Naive thymus-derived CD4-positive, alpha-beta T cell (primary cell): ENCODE measurements at regions of chr1 and their contacts with region 1.

Region 1: GRCh38 chr1:28602536-28603439 is 10.7 kb downstream of the RAB42 start:
- DNase-seq: peak in 3 of 9 donors; percentile 22 to 36 (median 25)
- ATAC-seq: no peak
- H3K4me3 ChIP-seq: no peak overlapping the region
- H3K4me3 Mint-ChIP-seq: no peak overlapping the region
- H3K27ac ChIP-seq: no peak overlapping the region
- H3K27ac Mint-ChIP-seq: peak overlapping the region in 1 of 9 donors; percentile 36
- H3K4me1 ChIP-seq: no peaks in the 10 kb centered on the region
- H3K4me1 Mint-ChIP-seq: peaks cover 0 to 23% (median 0%) of the 10 kb centered on the region in 7 donors
- H3K27me3 ChIP-seq: no peaks in the 10 kb centered on the region
- H3K27me3 Mint-ChIP-seq: no peaks in the 10 kb centered on the region

Region 2: DNA sequence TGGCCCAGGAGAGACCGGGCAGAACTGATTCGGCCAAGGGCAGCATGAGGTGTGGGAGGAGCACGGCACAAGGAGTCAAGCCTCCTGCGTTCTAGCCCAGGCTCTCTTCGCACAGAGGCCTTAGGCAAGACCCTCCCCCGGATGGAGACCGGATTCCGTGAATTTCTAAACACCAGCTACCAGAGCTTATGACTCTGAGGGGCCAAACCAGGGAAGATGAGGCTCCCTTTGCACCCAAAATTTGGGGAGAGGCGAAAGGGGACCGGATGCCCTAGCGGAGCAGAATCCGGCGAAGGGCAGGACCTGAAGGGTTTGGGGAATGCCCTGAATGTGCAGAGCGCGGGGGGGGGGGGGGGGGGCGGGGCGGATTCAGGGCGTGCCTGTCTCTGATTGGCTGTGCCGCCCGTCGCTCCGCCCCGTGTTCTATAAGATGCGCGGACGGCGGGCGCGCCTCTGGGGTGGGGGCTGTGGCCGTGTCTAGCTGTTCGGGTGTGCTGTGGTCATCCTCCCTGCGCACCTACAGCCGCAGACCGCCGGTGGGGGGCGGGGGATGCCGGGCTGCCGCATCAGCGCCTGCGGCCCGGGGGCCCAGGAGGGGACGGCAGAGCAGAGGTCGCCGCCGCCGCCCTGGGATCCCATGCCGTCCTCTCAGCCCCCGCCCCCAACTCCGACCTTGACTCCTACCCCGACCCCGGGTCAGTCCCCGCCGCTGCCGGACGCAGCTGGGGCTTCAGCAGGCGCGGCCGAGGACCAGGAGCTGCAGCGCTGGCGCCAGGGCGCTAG is 1609.4 kb before region 1 on chr1 and contains the start of gene TRNP1:
- CTCF ChIA-PET with region 1: no interaction called
- POLR2A ChIA-PET with region 1: no interaction called
- intact Hi-C with region 1: no loop called
- DNase-seq: peak; percentile 24 to 79 (median 50)
- ATAC-seq: peak; percentile 75
- H3K4me3 ChIP-seq: peak within 1 kb of the TSS; percentile 53
- H3K4me3 Mint-ChIP-seq: peak within 1 kb of the TSS; percentile 74 to 91 (median 78)
- H3K27ac ChIP-seq: no peak within 1 kb of the TSS
- H3K27ac Mint-ChIP-seq: peak within 1 kb of the TSS in 3 of 9 donors; percentile 48 to 68 (median 50)
- H3K4me1 ChIP-seq: peaks cover 5 to 21% of the 10 kb centered on the region in 2 donors
- H3K4me1 Mint-ChIP-seq: peaks cover 5 to 27% (median 22%) of the 10 kb centered on the region in 7 donors
- H3K27me3 ChIP-seq: peaks cover 0 to 18% of the 10 kb centered on the region in 2 donors
- H3K27me3 Mint-ChIP-seq: peaks cover 37 to 71% (median 42%) of the 10 kb centered on the region in 5 donors
- total RNA-seq, gene TRNP1: 0.19 to 5.0 TPM in 2 of 5 experiments, not detected in the others

Region 3: DNA sequence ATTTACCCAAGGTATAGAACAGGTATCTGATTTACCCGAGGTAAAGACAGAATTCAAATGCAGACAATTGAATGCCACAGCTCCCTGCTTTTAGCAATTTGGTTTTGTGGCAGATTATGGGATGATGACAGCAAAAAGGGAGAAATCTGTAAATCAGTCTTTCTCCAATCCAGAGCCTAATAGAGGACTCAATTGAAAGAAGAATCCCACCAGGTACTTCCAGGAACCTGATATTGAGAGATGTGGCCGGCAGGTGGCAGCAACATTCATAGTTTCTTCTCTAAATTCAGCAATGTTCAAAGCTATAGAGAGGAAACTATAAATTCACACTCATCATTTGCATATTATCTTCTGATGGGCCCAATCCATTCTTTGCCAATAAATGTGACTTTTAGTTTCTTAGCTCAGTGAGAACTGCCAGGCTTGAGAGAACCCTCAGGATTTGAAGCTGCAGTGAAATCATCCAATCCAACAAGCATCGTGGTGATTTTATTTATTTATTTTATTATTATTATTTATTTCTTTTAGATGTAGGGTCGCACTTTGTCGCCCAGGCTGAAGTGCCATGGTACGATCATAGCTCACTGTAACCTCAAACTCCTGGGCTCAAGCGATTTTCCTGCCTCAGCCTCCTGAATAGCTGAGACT is 243.1 kb before region 1 on chr1:
- CTCF ChIA-PET with region 1: interaction called, 3 read pairs
- POLR2A ChIA-PET with region 1: no interaction called
- intact Hi-C with region 1: loop called in 1 of 2 experiments (anchors 2 kb)
- DNase-seq: peak; percentile 26 to 67 (median 54)
- ATAC-seq: peak; percentile 80
- H3K4me3 ChIP-seq: no peak overlapping the region
- H3K4me3 Mint-ChIP-seq: no peak overlapping the region
- H3K27ac ChIP-seq: no peak overlapping the region
- H3K27ac Mint-ChIP-seq: no peak overlapping the region
- H3K4me1 ChIP-seq: no peaks in the 10 kb centered on the region
- H3K4me1 Mint-ChIP-seq: peaks cover 0 to 4% (median 0%) of the 10 kb centered on the region in 7 donors
- H3K27me3 ChIP-seq: no peaks in the 10 kb centered on the region
- H3K27me3 Mint-ChIP-seq: peaks cover 0 to 9% (median 0%) of the 10 kb centered on the region in 5 donors

Region 4: GRCh38 chr1:28409090-28409489 is 193.7 kb before region 1 on chr1:
- CTCF ChIA-PET with region 1: interaction called, 3 read pairs
- POLR2A ChIA-PET with region 1: no interaction called
- intact Hi-C with region 1: loop called in 1 of 2 experiments (anchors 2 kb)
- DNase-seq: no peak
- ATAC-seq: no peak
- H3K4me3 ChIP-seq: no peak overlapping the region
- H3K4me3 Mint-ChIP-seq: no peak overlapping the region
- H3K27ac ChIP-seq: no peak overlapping the region
- H3K27ac Mint-ChIP-seq: peak overlapping the region in 1 of 9 donors; percentile 39
- H3K4me1 ChIP-seq: no peaks in the 10 kb centered on the region
- H3K4me1 Mint-ChIP-seq: peaks cover 0 to 14% (median 11%) of the 10 kb centered on the region in 7 donors
- H3K27me3 ChIP-seq: no peaks in the 10 kb centered on the region
- H3K27me3 Mint-ChIP-seq: no peaks in the 10 kb centered on the region

Region 5: DNA sequence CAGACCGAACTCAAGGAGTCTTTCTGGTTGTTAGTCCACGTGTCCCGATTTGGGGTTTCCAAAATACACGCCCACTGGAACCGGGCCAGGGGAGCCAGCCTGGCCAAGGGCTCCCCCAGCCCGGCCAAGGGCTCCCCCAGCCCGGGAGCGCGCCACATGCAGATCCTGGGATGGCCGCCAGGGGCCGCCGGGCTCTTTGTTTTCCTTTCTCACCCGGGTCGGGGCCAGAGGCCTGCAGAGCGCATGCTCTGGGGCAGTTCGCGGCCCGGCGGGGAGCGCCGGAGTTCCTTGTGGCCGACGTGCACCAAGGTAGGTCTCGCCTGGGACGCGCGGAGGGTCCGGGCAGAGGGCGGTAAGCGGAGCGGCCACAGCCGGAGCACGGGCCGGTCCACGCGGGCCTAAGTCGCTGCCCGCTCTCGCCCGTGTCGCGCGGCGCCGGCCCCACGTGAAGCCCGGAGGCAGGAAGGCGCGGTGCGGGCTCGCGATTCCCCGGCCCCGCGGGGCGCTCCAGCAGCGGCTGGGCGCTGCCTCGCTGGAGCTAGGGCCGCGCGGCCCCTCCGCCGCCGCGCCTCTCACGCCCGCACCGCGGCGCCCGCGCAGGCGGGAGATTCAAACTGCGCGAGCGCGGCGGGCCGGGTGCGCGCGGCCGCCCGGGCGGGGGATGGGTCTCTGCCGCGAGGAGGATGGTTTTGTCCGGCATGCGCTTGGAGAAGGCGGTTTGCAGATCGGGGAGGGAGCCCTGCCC is 84.6 kb before region 1 on chr1:
- CTCF ChIA-PET with region 1: interaction called, 5 read pairs
- POLR2A ChIA-PET with region 1: interaction called, 3 read pairs
- intact Hi-C with region 1: loop called (anchors 1 to 2 kb)
- DNase-seq: peak; percentile 77 to 94 (median 84)
- ATAC-seq: peak; percentile 95
- H3K4me3 ChIP-seq: peak overlapping the region; percentile 81
- H3K4me3 Mint-ChIP-seq: peak overlapping the region; percentile 76 to 91 (median 88)
- H3K27ac ChIP-seq: peak overlapping the region; percentile 76
- H3K27ac Mint-ChIP-seq: peak overlapping the region; percentile 59 to 91 (median 83)
- H3K4me1 ChIP-seq: peaks cover 9 to 10% of the 10 kb centered on the region in 2 donors
- H3K4me1 Mint-ChIP-seq: peaks cover 16 to 46% (median 23%) of the 10 kb centered on the region in 7 donors
- H3K27me3 ChIP-seq: no peaks in the 10 kb centered on the region
- H3K27me3 Mint-ChIP-seq: no peaks in the 10 kb centered on the region

Region 6: GRCh38 chr1:28591708-28592320 is 11.0 kb before region 1 on chr1 and contains the start of gene RAB42:
- CTCF ChIA-PET with region 1: no interaction called
- POLR2A ChIA-PET with region 1: no interaction called
- intact Hi-C with region 1: no loop called
- DNase-seq: peak in 1 of 9 donors; percentile 14
- ATAC-seq: peak; percentile 70
- H3K4me3 ChIP-seq: no peak within 1 kb of the TSS
- H3K4me3 Mint-ChIP-seq: peak within 1 kb of the TSS; percentile 73 to 88 (median 81)
- H3K27ac ChIP-seq: peak within 1 kb of the TSS; percentile 14
- H3K27ac Mint-ChIP-seq: no peak within 1 kb of the TSS
- H3K4me1 ChIP-seq: no peaks in the 10 kb centered on the region
- H3K4me1 Mint-ChIP-seq: peaks cover 0 to 11% (median 4%) of the 10 kb centered on the region in 7 donors
- H3K27me3 ChIP-seq: no peaks in the 10 kb centered on the region
- H3K27me3 Mint-ChIP-seq: peaks cover 0 to 8% (median 5%) of the 10 kb centered on the region in 5 donors
- total RNA-seq, gene RAB42: 1.1 to 1.2 TPM in 2 of 5 experiments, not detected in the others

Region 7: DNA sequence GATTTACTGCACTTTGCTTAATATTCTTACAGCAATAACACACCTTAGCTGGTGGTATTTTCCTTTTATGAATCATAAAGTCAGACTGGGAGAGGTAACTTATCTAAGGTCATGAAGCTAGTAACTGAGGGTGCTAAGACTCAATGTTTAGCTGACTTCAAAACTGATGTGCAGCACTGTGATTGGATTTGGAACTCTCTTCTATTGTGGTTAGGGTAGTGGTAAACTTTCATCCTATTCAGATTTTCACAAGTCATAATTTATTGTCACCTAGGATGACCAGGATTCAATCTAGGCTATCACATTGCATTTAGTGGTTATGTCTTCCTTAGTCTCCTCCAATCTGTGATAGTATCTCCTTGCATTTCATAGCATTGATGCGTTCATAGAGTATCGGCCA is 330.5 kb after region 1 on chr1:
- CTCF ChIA-PET with region 1: no interaction called
- POLR2A ChIA-PET with region 1: no interaction called
- intact Hi-C with region 1: no loop called
- DNase-seq: peak in 6 of 9 donors; percentile 24 to 48 (median 32)
- ATAC-seq: peak; percentile 75
- H3K4me3 ChIP-seq: peak overlapping the region; percentile 15
- H3K4me3 Mint-ChIP-seq: peak overlapping the region; percentile 1 to 84 (median 68)
- H3K27ac ChIP-seq: peak overlapping the region; percentile 7
- H3K27ac Mint-ChIP-seq: peak overlapping the region in 8 of 9 donors; percentile 39 to 95 (median 54)
- H3K4me1 ChIP-seq: peaks cover 56 to 57% of the 10 kb centered on the region in 2 donors
- H3K4me1 Mint-ChIP-seq: peaks cover 42 to 86% (median 73%) of the 10 kb centered on the region in 7 donors
- H3K27me3 ChIP-seq: no peaks in the 10 kb centered on the region
- H3K27me3 Mint-ChIP-seq: no peaks in the 10 kb centered on the region